GM23248 (cell line): ENCODE measurements at regions of chr5 and their contacts with region 1.

Region 1: DNA sequence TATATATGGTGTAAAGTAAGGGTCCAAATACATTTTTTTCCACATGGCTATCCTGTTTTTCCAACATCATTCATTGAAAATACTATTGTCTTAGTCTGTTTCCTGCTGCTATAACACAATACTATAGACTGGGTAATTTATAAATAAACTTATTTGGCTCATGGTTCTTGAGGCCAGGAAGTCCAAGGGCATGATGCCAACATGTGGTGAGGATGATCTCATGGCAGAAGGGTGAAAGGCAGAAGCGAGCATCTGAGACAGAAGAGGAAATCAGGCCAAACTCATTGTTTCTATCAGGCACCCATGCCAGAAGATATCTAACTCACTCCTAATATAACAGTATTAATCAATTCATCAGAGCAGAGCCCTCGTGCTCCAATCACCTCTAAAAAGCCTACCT is 42.6 kb downstream of the ANKRD55 start:
- DNase-seq: peak; percentile 80
- H3K4me3 ChIP-seq: no peak overlapping the region
- H3K27ac ChIP-seq: no peak overlapping the region
- H3K4me1 ChIP-seq: no peaks in the 10 kb centered on the region
- H3K27me3 ChIP-seq: no peaks in the 10 kb centered on the region

Region 2: DNA sequence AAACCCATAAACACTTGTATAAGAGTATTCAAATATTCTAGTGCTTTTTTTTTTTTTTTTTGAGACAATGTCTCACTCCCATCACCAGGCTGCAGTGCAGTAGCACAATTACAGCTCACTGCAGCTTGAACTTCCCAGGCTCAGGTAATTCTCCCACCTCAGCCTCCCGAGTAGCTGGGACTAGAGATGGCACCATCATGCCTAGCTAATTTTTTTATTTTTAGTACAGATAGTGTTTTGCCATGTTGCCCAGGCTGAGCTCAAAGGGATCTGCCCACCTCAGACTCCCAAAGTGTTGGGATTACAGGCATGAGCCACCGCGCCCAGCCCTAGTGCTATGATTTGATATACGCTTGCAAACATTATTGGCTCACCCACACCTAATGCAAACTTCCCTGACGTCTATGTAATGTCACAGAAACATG is 207.5 kb before region 1 on chr5:
- in situ Hi-C with region 1: loop called (anchors 10 kb)
- DNase-seq: peak; percentile 27
- H3K4me3 ChIP-seq: no peak overlapping the region
- H3K27ac ChIP-seq: no peak overlapping the region
- H3K4me1 ChIP-seq: peaks cover 10% of the 10 kb centered on the region
- H3K27me3 ChIP-seq: no peaks in the 10 kb centered on the region

Region 3: DNA sequence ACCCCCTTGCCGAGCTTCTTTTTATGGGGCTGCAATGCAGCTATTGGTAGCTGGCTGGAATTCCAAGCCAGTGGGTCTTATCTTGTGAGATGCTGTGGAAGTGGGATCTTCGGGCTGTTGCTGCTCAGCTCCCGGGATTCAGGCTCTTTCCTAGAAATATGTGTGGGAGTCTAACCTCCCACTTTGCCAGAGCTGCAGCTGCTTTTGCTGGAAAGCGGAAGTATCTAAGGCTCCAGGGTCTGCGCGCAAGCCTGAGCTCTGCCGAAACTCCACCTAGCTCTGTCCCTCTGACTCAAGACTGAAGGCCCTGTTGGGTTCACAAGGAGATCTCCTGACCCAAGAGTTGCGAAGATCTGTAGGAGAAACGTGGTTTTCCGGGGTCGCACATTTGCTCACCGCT is 193.7 kb after region 1 on chr5:
- in situ Hi-C with region 1: no loop called
- DNase-seq: no peak
- H3K4me3 ChIP-seq: no peak overlapping the region
- H3K27ac ChIP-seq: no peak overlapping the region
- H3K4me1 ChIP-seq: no peaks in the 10 kb centered on the region
- H3K27me3 ChIP-seq: peaks cover 32% of the 10 kb centered on the region

Region 4: GRCh38 chr5:56791396-56791795 is 600.9 kb after region 1 on chr5:
- in situ Hi-C with region 1: no loop called
- DNase-seq: no peak
- H3K4me3 ChIP-seq: no peak overlapping the region
- H3K27ac ChIP-seq: no peak overlapping the region
- H3K4me1 ChIP-seq: no peaks in the 10 kb centered on the region
- H3K27me3 ChIP-seq: no peaks in the 10 kb centered on the region; the same call in 1 of the 2 replicates